ENCODE measurements at regions of chr3 and their contacts with region 1.

Region 1: DNA sequence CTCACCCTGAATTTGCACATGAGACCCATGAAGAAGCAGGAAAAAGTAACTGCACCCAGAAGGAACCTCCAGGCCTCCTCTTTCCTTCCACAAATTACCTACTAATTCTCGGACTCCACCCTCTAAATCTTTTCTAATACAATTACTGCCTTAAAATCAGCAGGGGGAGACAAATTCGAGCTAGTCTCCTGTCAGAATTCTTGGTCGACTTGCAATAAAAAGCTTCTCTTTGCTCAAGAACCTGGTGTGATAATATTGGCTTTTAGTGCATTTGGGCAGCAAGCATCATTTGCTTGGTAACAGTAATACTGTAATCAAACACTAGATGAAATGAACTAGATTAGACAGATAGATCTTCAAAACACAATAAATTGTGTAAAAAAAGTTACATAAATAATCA is 281.9 kb downstream of the RAP2B start:
- DNase-seq: no peak
- H3K4me3 ChIP-seq: no peak overlapping the region
- CTCF ChIP-seq: no peak
- POLR2A ChIP-seq: no peak

Region 2: GRCh38 chr3:152865668-152866245 is 578.2 kb before region 1 on chr3:
- intact Hi-C with region 1: loop called (anchors 5 kb)
- DNase-seq: no peak
- H3K4me3 ChIP-seq: no peak overlapping the region
- CTCF ChIP-seq: no peak
- POLR2A ChIP-seq: no peak

Region 3: DNA sequence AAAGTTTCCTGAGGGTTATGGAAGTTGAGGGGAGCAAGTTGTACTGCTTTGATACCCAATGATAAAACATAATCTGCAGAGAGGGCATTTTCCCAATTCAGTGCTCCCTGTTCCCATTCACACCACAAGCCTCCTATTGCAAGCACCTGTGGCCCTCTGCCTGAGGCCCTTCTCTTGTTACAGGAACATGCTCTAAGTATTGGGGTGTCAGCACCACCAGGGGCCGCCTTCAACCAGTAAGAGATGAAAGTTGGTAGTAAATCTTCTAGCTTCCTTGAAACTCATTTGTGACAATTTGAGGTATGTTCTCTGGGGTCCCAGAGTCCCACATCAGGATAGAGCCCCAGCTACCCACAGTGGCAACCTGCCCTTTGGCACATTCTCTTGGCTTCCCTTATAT is 411.8 kb after region 1 on chr3:
- intact Hi-C with region 1: no loop called
- DNase-seq: no peak
- H3K4me3 ChIP-seq: no peak overlapping the region
- CTCF ChIP-seq: no peak
- POLR2A ChIP-seq: no peak